ENCODE measurements at regions of chr11 and their contacts with region 1.

Region 1: GRCh38 chr11:5791165-5791564 is at the start of gene OR52N1:
- DNase-seq: no peak
- ATAC-seq: no peak
- H3K4me3 ChIP-seq: no peak within 1 kb of the TSS
- H3K4me3 Mint-ChIP-seq: no peak within 1 kb of the TSS
- H3K27ac ChIP-seq: no peak within 1 kb of the TSS
- H3K27ac Mint-ChIP-seq: no peak within 1 kb of the TSS
- H3K4me1 ChIP-seq: no peaks in the 10 kb centered on the region
- H3K4me1 Mint-ChIP-seq: no peaks in the 10 kb centered on the region
- H3K27me3 ChIP-seq: peaks cover 0 to 5% of the 10 kb centered on the region in 2 experiments
- H3K27me3 Mint-ChIP-seq: peaks cover 24% of the 10 kb centered on the region
- CTCF ChIP-seq: no peak
- total RNA-seq, gene OR52N1: not detected

Region 2: GRCh38 chr11:5767056-5767455 is 24.1 kb before region 1 on chr11:
- CTCF ChIA-PET with region 1: no interaction called
- POLR2A ChIA-PET with region 1: no interaction called
- intact Hi-C with region 1: loop called (anchors 1 kb)
- DNase-seq: no peak
- ATAC-seq: no peak
- H3K4me3 ChIP-seq: no peak overlapping the region
- H3K4me3 Mint-ChIP-seq: no peak overlapping the region
- H3K27ac ChIP-seq: no peak overlapping the region
- H3K27ac Mint-ChIP-seq: no peak overlapping the region
- H3K4me1 ChIP-seq: no peaks in the 10 kb centered on the region
- H3K4me1 Mint-ChIP-seq: no peaks in the 10 kb centered on the region
- H3K27me3 ChIP-seq: no peaks in the 10 kb centered on the region
- H3K27me3 Mint-ChIP-seq: no peaks in the 10 kb centered on the region
- CTCF ChIP-seq: no peak

Measured in CD4-positive, alpha-beta T cell (primary cell).